ENCODE measurements at regions of chr13 and their contacts with region 1.

Region 1: GRCh38 chr13:42875475-42876269 is 94.3 kb downstream of the FAM216B start:
- DNase-seq: no peak
- ATAC-seq: no peak; the same call in 1 of the 2 replicates
- H3K4me3 ChIP-seq: no peak overlapping the region
- H3K27ac ChIP-seq: no peak overlapping the region
- H3K4me1 ChIP-seq: no peaks in the 10 kb centered on the region
- H3K27me3 ChIP-seq: no peaks in the 10 kb centered on the region
- CTCF ChIP-seq: no peak
- POLR2A ChIP-seq: no peak
- RAD21 ChIP-seq: no peak

Region 2: DNA sequence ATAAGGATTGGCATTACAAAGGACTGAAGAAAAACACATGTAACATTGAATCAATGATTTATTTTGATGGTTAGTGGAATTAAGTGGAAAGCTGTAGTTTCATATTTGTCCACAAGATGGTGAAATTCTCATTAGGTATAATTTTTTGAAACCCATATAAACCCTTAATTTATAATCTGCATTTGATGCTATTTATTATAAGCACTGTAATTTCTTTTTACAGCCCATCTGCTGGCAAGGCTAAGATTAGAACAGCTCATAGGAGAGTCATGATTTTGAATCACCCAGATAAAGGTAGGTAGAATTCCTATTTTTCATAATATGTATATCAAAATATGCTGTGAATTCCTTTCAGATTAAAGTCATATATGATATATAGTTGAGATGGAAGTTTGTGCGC is 209.9 kb after region 1 on chr13:
- CTCF ChIA-PET with region 1: no interaction called
- POLR2A ChIA-PET with region 1: no interaction called
- RAD21 ChIA-PET with region 1: no interaction called
- intact Hi-C with region 1: no loop called
- DNase-seq: peak; percentile 16
- ATAC-seq: 0 out of 2 replicates have a peak, but pooled peaks have one; percentile 34
- H3K4me3 ChIP-seq: no peak overlapping the region
- H3K27ac ChIP-seq: no peak overlapping the region
- H3K4me1 ChIP-seq: no peaks in the 10 kb centered on the region
- H3K27me3 ChIP-seq: no peaks in the 10 kb centered on the region
- CTCF ChIP-seq: peak; percentile 17 to 69 (median 32); a peak in 4 of 6 replicates
- POLR2A ChIP-seq: no peak
- RAD21 ChIP-seq: peak; percentile 51

Region 3: GRCh38 chr13:43473437-43473836 is 597.8 kb after region 1 on chr13:
- CTCF ChIA-PET with region 1: no interaction called
- POLR2A ChIA-PET with region 1: no interaction called
- RAD21 ChIA-PET with region 1: no interaction called
- intact Hi-C with region 1: loop called (anchors 5 kb)
- DNase-seq: no peak
- ATAC-seq: no peak
- H3K4me3 ChIP-seq: no peak overlapping the region
- H3K27ac ChIP-seq: no peak overlapping the region
- H3K4me1 ChIP-seq: no peaks in the 10 kb centered on the region
- H3K27me3 ChIP-seq: no peaks in the 10 kb centered on the region
- CTCF ChIP-seq: no peak
- POLR2A ChIP-seq: no peak
- RAD21 ChIP-seq: no peak

Measured in HCT116 (cell line).